ENCODE measurements at regions of chr22 and their contacts with region 1.

Region 1: DNA sequence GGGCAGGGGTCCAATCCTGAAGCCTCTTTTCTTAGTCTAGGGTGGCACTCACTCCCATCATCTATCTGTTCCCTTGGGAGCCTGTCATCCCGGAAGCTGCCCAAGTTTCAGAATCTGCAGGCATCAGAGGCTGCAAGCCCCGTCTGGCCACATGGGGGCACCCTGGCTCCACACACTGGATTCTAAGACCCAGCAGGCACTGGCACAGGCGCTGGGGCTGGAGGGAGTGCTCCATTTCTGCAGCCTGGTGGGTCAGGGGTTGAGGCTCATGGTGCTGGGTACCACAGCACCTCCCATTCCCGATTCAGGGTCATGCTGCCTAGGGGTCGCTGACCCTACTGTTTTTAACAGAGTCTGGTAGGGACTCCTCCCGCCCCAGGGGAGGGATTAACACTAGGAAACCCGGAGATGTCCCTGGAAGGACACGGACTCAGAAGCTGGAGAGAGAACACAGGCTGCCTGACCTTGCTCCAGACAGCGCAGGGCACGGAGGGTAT is 243.9 kb upstream of the SYN3 start:
- DNase-seq: peak; percentile 66

Region 2: GRCh38 chr22:33194529-33195077 is 107.5 kb before region 1 on chr22:
- in situ Hi-C with region 1: no loop called
- DNase-seq: no peak

Region 3: GRCh38 chr22:33209930-33210784 is 91.9 kb before region 1 on chr22:
- in situ Hi-C with region 1: no loop called
- DNase-seq: peak; percentile 71

Region 4: GRCh38 chr22:33401291-33401690 is 99.2 kb after region 1 on chr22:
- in situ Hi-C with region 1: no loop called
- DNase-seq: no peak

Region 5: DNA sequence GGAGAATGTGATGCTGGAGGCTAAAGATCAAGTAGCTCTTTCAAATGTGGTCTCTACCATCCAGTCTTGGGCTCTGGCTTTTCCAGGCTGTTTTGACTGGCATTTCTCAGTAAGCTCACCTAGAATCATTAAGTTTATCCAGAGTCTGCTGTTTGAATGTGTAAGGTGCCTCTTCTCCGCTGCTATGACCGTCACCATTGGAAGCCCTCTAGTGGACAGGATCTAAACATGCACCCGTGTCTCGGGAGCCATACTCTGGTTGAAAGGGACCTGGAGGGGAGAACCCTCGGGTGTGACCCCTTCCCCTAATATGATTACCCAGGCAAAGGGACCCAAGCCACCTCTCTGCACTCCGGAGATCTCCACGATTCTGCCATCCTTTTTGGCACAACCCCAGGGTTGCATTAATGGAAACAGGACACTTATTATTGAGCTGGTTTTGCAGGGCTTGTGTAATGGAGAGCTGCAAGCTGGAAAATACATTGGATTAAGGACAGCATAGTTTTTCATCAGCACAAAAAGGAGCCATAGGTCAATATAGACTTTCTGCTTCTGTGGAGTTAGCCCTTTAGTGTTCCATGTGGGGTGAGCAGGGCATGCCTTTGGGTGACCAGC is 809.2 kb after region 1 on chr22:
- in situ Hi-C with region 1: loop called (anchors 25 kb)
- DNase-seq: peak; percentile 13